ENCODE measurements at regions of chr6 and their contacts with region 1.

Region 1: GRCh38 chr6:30742316-30743098 is at the start of gene FLOT1:
- DNase-seq: peak; percentile 97 to 98 (median 97)
- ATAC-seq: peak; percentile 92
- H3K4me3 ChIP-seq: peak within 1 kb of the TSS; percentile 91
- H3K27ac ChIP-seq: peak within 1 kb of the TSS; percentile 87
- H3K4me1 ChIP-seq: peaks cover 38 to 47% of the 10 kb centered on the region in 2 experiments
- H3K27me3 ChIP-seq: no peaks in the 10 kb centered on the region
- CTCF ChIP-seq: 0 out of 6 replicates have a peak, but pooled peaks of 1 of the 3 experiments have one; percentile 2
- EP300 ChIP-seq: peak; percentile 36
- POLR2A ChIP-seq: peak; percentile 81
- RAD21 ChIP-seq: peak in 1 of 2 experiments; percentile 41; a peak in 3 of 4 replicates
- polyA plus RNA-seq, gene FLOT1: 11.7 to 12.0 TPM

Region 2: DNA sequence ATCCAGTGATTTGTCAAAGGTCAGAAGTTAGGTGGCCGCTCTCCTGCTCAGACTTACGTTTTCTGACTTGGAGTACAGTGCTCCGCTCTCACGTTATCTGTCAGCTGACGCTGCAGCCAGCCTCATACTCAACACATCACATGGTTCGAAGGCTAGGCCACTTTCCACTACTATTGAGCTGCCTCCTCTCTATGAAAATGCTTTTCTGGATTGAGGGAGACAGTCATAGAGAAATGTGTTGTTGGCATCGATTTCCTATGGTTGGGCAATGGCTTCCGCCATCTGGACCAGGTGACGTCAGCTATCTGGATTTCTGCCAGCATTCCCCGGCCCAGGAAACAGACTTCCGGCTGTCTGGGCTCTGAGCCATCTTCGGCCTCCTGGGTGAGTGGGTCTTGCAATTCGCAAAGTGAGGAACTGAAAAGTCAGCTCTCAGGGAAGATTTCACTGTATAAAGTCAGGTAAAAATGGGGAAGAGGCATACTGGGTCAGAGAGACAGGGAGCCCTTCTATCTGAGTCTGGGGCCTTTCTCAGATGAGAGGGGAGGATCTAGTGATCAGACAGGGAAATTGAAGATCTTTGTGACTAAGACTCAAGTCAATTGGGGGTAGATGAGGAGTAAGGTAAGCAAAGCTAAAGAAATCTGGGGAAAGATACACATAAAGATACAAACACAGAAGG is 39.4 kb after region 1 on chr6:
- CTCF ChIA-PET with region 1: interaction called, 3 read pairs
- POLR2A ChIA-PET with region 1: interaction called, 4 read pairs
- in situ Hi-C with region 1: no loop called
- intact Hi-C with region 1: loop called (anchors 2 kb)
- DNase-seq: peak; percentile 88 to 97 (median 91)
- ATAC-seq: peak; percentile 79
- H3K4me3 ChIP-seq: peak overlapping the region; percentile 21
- H3K27ac ChIP-seq: peak overlapping the region; percentile 91
- H3K4me1 ChIP-seq: peaks cover 45 to 54% of the 10 kb centered on the region in 2 experiments
- H3K27me3 ChIP-seq: no peaks in the 10 kb centered on the region
- CTCF ChIP-seq: no peak
- EP300 ChIP-seq: peak; percentile 88
- POLR2A ChIP-seq: peak; percentile 78
- RAD21 ChIP-seq: peak; percentile 3 to 31; a peak in 1 of 4 replicates

Region 3: GRCh38 chr6:30821862-30822782 is 79.6 kb after region 1 on chr6:
- CTCF ChIA-PET with region 1: interaction called, 20 read pairs
- POLR2A ChIA-PET with region 1: interaction called, 4 read pairs
- in situ Hi-C with region 1: no loop called
- intact Hi-C with region 1: loop called (anchors 5 kb)
- DNase-seq: peak; percentile 51 to 84 (median 59)
- ATAC-seq: peak; percentile 76
- H3K4me3 ChIP-seq: no peak overlapping the region
- H3K27ac ChIP-seq: peak overlapping the region; percentile 20; the same call in 2 of the 3 replicates
- H3K4me1 ChIP-seq: peaks cover 15 to 36% of the 10 kb centered on the region in 2 experiments
- H3K27me3 ChIP-seq: no peaks in the 10 kb centered on the region
- CTCF ChIP-seq: peak; percentile 51 to 84 (median 70); a peak in 5 of 6 replicates
- EP300 ChIP-seq: 0 out of 2 replicates have a peak, but pooled peaks have one; percentile 13
- POLR2A ChIP-seq: no peak
- RAD21 ChIP-seq: peak; percentile 69 to 72

Region 4: DNA sequence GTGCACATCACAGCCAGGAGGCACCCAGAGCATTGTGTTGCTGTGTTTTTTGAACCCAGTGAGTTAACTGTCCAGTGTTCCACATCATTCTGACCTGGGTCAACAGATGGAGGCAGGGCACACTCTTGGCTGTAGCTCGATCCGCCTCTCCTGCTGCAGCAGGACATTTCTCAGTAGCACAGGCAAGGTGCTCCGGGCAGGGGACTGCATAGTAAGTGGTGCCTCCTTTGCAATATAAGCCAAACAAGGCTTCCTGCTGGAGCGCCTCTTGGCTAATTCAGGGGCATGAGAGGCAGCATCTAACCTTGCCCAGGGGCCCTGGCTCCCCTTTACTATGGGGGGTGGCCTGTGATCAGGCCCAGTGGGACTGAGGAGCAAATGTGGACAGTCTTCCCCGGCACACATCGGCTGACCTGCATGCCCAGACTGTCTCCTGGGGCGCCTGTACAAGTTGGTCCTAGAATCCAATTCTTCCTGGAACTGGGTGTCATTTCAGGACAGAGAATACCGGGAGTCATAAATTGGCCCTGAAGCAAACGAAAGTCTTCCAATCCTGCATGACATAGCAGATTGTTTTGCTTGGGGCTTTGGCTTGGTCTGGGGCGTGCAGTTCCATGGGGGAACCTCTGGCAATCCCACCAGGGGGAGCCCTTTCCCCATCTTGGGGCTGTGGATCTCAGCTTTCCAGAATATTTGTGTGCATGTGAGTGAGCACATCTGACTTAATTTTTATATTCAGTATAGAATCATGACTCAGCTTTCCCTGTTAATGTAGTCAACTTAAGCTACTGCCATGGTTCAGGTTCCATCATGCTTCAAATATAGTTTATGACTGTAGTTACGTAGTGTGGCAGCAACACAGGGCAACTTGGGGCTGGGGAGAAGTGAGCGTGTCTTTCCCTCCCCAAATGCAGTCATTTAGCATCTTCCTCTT is 85.8 kb after region 1 on chr6:
- CTCF ChIA-PET with region 1: interaction called, 14 read pairs
- POLR2A ChIA-PET with region 1: interaction called, 4 read pairs
- in situ Hi-C with region 1: no loop called
- intact Hi-C with region 1: loop called (anchors 5 kb)
- DNase-seq: peak; percentile 92 to 95 (median 94)
- ATAC-seq: peak; percentile 97
- H3K4me3 ChIP-seq: no peak overlapping the region
- H3K27ac ChIP-seq: peak overlapping the region; percentile 76
- H3K4me1 ChIP-seq: peaks cover 11 to 23% of the 10 kb centered on the region in 2 experiments
- H3K27me3 ChIP-seq: no peaks in the 10 kb centered on the region
- CTCF ChIP-seq: peak; percentile 97 to 99 (median 99)
- EP300 ChIP-seq: peak; percentile 69
- POLR2A ChIP-seq: no peak
- RAD21 ChIP-seq: peak; percentile 100

Region 5: GRCh38 chr6:31079656-31080261 is 337.3 kb after region 1 on chr6:
- CTCF ChIA-PET with region 1: interaction called, 3 read pairs
- POLR2A ChIA-PET with region 1: interaction called, 3 read pairs
- in situ Hi-C with region 1: loop called (anchors 5 kb)
- intact Hi-C with region 1: loop called (anchors 5 kb)
- DNase-seq: peak; percentile 43 to 79 (median 56)
- ATAC-seq: peak; percentile 80
- H3K4me3 ChIP-seq: no peak overlapping the region
- H3K27ac ChIP-seq: no peak overlapping the region
- H3K4me1 ChIP-seq: peaks cover 6% of the 10 kb centered on the region in 2 experiments; a peak in 4 of 5 replicates
- H3K27me3 ChIP-seq: no peaks in the 10 kb centered on the region
- CTCF ChIP-seq: peak; percentile 85 to 95 (median 89)
- EP300 ChIP-seq: 0 out of 2 replicates have a peak, but pooled peaks have one; percentile 44
- POLR2A ChIP-seq: no peak
- RAD21 ChIP-seq: peak; percentile 66 to 84

Measured in K562 (cell line).